Caco-2 (cell line): ENCODE measurements at regions of chr2 and their contacts with region 1.

Region 1: DNA sequence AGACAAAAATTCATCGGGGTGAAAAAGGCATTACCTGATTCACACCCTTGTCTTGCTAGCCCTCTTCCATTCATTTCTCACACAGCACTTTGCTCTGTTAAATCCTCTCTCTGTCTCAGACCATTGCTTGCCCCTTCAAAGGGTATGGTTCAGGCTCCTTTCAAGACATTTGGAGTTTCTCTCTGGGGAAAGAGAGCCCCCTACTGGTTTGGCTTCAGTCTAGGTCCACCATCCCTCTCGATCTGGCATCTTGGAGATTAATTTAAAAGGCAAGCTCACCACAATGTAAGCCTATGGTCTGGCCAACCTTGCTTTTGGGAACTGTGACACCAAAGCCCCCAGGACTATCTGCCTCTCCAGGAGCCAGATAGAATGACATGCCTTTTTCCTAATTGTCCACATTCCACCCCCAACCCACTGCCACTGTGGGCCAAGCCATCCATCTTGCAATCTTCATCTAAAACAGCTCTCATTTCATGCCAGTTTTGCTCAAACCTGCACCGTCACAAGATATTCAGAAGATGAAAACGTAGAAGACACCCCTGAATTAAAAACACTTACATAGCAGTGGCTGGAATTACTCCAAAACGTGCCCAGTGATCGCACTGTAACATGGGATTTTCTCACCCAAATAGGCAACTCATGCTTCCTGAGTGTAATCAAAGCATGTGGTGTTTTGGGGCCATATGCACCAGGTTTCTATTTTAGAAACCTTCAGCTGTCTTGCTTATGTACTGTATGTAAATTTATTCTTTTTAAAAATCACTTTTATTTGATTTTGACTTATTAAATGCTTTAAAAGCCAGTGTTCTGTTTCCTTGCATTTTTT is 93.9 kb downstream of the FARSB start:
- DNase-seq: peak in 1 of 2 experiments; percentile 69
- H3K4me3 ChIP-seq: no peak overlapping the region
- H3K4me3 Mint-ChIP-seq: no peak overlapping the region
- H3K27ac Mint-ChIP-seq: no peak overlapping the region
- H3K4me1 ChIP-seq: no peaks in the 10 kb centered on the region
- H3K4me1 Mint-ChIP-seq: no peaks in the 10 kb centered on the region
- H3K27me3 ChIP-seq: no peaks in the 10 kb centered on the region
- H3K27me3 Mint-ChIP-seq: peaks cover 4% of the 10 kb centered on the region
- CTCF ChIP-seq: peak; percentile 58 to 80

Region 2: DNA sequence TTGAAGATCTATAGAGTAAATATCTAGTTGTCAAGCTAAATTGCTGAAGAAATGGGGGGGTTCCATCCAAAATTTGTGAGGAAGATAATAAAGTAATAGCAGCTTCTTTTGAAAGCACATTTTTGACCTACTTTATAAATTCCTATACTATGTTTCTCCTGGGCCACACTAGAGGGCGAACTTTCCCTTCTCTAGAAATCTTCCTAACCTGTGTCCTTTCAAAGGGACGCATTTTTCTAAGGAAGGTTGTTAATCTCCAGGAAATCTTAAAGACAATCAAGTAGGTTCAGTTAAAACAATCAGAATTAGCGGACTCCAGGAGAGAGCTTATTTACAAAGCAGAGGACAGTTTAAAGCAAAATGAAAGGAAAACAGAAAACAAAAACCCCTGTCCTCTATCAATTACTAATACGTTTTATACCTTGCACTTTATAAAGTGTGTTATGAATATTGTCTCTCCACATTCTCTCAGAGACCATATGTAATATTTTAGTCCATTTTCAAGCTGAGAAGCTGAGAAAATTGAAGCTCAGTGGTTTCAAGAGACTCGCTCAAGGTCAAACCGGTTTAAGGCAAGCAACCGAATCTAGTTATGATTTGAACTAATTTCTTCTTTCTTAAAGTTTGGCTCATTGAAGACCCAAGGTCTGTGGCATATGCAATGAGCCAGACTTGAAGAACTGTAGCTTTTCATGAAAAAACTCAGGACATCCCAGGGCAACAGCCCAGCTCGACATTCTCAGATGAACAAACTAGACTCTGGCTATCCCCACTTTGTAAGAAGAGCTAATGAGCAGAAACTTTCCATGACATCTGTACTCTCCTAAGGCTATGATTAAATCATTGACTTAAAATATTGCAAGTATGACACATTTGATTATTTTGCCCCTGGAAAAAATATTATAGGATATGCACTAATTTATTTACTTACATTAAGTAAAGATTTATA is 536.8 kb before region 1 on chr2:
- CTCF ChIA-PET with region 1: no interaction called
- POLR2A ChIA-PET with region 1: no interaction called
- intact Hi-C with region 1: loop called (anchors 1 kb)
- DNase-seq: peak in 1 of 2 experiments; percentile 32
- H3K4me3 ChIP-seq: no peak overlapping the region
- H3K4me3 Mint-ChIP-seq: no peak overlapping the region
- H3K27ac Mint-ChIP-seq: no peak overlapping the region
- H3K4me1 ChIP-seq: no peaks in the 10 kb centered on the region; the same call in 1 of the 2 replicates
- H3K4me1 Mint-ChIP-seq: no peaks in the 10 kb centered on the region
- H3K27me3 ChIP-seq: no peaks in the 10 kb centered on the region
- H3K27me3 Mint-ChIP-seq: no peaks in the 10 kb centered on the region
- CTCF ChIP-seq: peak; percentile 63 to 90

Region 3: GRCh38 chr2:222057347-222058073 is 504.5 kb before region 1 on chr2:
- CTCF ChIA-PET with region 1: no interaction called
- POLR2A ChIA-PET with region 1: no interaction called
- intact Hi-C with region 1: loop called (anchors 1 kb)
- DNase-seq: no peak
- H3K4me3 ChIP-seq: no peak overlapping the region
- H3K4me3 Mint-ChIP-seq: no peak overlapping the region
- H3K27ac Mint-ChIP-seq: no peak overlapping the region
- H3K4me1 ChIP-seq: no peaks in the 10 kb centered on the region
- H3K4me1 Mint-ChIP-seq: no peaks in the 10 kb centered on the region
- H3K27me3 ChIP-seq: peaks cover 4% of the 10 kb centered on the region; the same call in 1 of the 2 replicates
- H3K27me3 Mint-ChIP-seq: peaks cover 28% of the 10 kb centered on the region
- CTCF ChIP-seq: peak; percentile 72 to 83

Region 4: DNA sequence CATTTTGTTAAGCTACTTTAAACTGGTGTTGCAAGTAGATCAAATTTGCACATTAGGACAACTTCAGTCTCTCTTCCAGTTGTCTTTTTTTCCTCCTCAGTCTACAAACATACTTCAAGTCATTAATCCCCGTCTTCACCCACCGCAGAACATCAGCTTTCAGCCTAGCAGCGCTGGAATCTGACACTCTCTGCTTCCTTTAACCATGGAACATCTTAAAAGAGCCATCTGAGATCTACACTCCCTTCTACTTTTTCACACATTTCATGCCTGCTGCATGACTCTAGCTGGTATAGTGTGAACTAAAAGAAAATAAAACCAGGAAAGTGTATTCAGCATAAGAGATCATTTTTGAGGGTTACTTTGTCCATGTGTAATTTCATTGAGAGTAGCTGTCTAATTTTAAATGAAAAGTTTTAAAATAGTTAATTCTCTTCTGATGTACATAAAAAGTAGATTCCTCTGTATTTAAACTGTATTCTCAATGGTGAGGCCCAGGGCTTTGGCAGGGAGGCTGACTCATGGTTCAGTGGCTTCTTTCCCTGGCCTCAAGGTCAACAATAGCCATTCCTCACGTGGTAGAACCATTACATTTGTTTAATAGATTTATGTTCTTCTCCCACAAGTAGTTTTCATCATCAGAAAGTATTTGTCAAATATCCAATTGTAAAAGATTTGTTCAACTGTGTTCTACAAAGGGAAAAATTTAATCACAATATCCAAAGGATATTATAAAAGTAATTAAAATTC is 121.2 kb before region 1 on chr2:
- CTCF ChIA-PET with region 1: interaction called, 3 read pairs
- POLR2A ChIA-PET with region 1: no interaction called
- intact Hi-C with region 1: loop called (anchors 5 kb)
- DNase-seq: no peak
- H3K4me3 ChIP-seq: no peak overlapping the region
- H3K4me3 Mint-ChIP-seq: no peak overlapping the region
- H3K27ac Mint-ChIP-seq: no peak overlapping the region
- H3K4me1 ChIP-seq: no peaks in the 10 kb centered on the region
- H3K4me1 Mint-ChIP-seq: no peaks in the 10 kb centered on the region
- H3K27me3 ChIP-seq: no peaks in the 10 kb centered on the region
- H3K27me3 Mint-ChIP-seq: peaks cover 8% of the 10 kb centered on the region
- CTCF ChIP-seq: no peak